Uterus (tissue), 4 donors: ENCODE measurements at regions of chr9 and their contacts with region 1.

Region 1: GRCh38 chr9:107465467-107466451 is 23.8 kb downstream of the KLF4 start:
- DNase-seq: peak; percentile 55 to 81
- H3K4me3 ChIP-seq: peak overlapping the region; percentile 33 to 50
- H3K27ac ChIP-seq: peak overlapping the region in 1 of 2 donors; percentile 4
- H3K4me1 ChIP-seq: no peaks in the 10 kb centered on the region
- H3K27me3 ChIP-seq: no peaks in the 10 kb centered on the region
- CTCF ChIP-seq: peak; percentile 88 to 94 (median 92)
- POLR2A ChIP-seq: peak in 1 of 2 donors; percentile 29

Region 2: GRCh38 chr9:106675745-106676144 is 790.0 kb before region 1 on chr9:
- intact Hi-C with region 1: no loop called
- DNase-seq: no peak
- H3K4me3 ChIP-seq: no peak overlapping the region
- H3K27ac ChIP-seq: no peak overlapping the region
- H3K4me1 ChIP-seq: no peaks in the 10 kb centered on the region
- H3K27me3 ChIP-seq: no peaks in the 10 kb centered on the region
- CTCF ChIP-seq: no peak
- POLR2A ChIP-seq: no peak

Region 3: GRCh38 chr9:106970219-106970975 is 495.4 kb before region 1 on chr9:
- intact Hi-C with region 1: no loop called
- DNase-seq: no peak
- H3K4me3 ChIP-seq: no peak overlapping the region
- H3K27ac ChIP-seq: no peak overlapping the region
- H3K4me1 ChIP-seq: no peaks in the 10 kb centered on the region
- H3K27me3 ChIP-seq: no peaks in the 10 kb centered on the region
- CTCF ChIP-seq: no peak
- POLR2A ChIP-seq: no peak

Region 4: GRCh38 chr9:108565651-108566378 is 1100.1 kb after region 1 on chr9:
- intact Hi-C with region 1: loop called (anchors 10 kb)
- DNase-seq: peak; percentile 38 to 46
- H3K4me3 ChIP-seq: no peak overlapping the region
- H3K27ac ChIP-seq: no peak overlapping the region
- H3K4me1 ChIP-seq: no peaks in the 10 kb centered on the region
- H3K27me3 ChIP-seq: no peaks in the 10 kb centered on the region
- CTCF ChIP-seq: peak; percentile 83 to 89 (median 86)
- POLR2A ChIP-seq: no peak